ENCODE measurements at regions of chr20 and their contacts with region 1.

Region 1: GRCh38 chr20:35207950-35208611 is 18.4 kb upstream of the MMP24 start:
- DNase-seq: peak; percentile 92
- H3K4me3 ChIP-seq: peak overlapping the region in 1 of 3 experiments; percentile 42
- H3K27ac ChIP-seq: peak overlapping the region; percentile 53
- H3K4me1 ChIP-seq: peaks cover 6% of the 10 kb centered on the region
- H3K27me3 ChIP-seq: no peaks in the 10 kb centered on the region
- CTCF ChIP-seq: peak; percentile 62 to 66
- POLR2A ChIP-seq: peak; percentile 16

Region 2: GRCh38 chr20:35021063-35021462 is 187.0 kb before region 1 on chr20:
- CTCF ChIA-PET with region 1: interaction called, 3 read pairs
- POLR2A ChIA-PET with region 1: no interaction called
- dilution Hi-C with region 1: no loop called
- intact Hi-C with region 1: loop called (anchors 5 kb)
- DNase-seq: peak; percentile 77
- H3K4me3 ChIP-seq: no peak overlapping the region
- H3K27ac ChIP-seq: peak overlapping the region; percentile 81
- H3K4me1 ChIP-seq: peaks cover 17% of the 10 kb centered on the region
- H3K27me3 ChIP-seq: no peaks in the 10 kb centered on the region
- CTCF ChIP-seq: no peak
- POLR2A ChIP-seq: no peak

Region 3: GRCh38 chr20:35111141-35111888 is 96.8 kb before region 1 on chr20:
- CTCF ChIA-PET with region 1: interaction called, 10 read pairs
- POLR2A ChIA-PET with region 1: no interaction called
- dilution Hi-C with region 1: no loop called
- intact Hi-C with region 1: no loop called
- DNase-seq: peak; percentile 62
- H3K4me3 ChIP-seq: no peak overlapping the region
- H3K27ac ChIP-seq: peak overlapping the region; percentile 91
- H3K4me1 ChIP-seq: peaks cover 16% of the 10 kb centered on the region
- H3K27me3 ChIP-seq: no peaks in the 10 kb centered on the region
- CTCF ChIP-seq: no peak
- POLR2A ChIP-seq: no peak

Region 4: GRCh38 chr20:35226775-35227681 is 18.9 kb after region 1 on chr20:
- CTCF ChIA-PET with region 1: interaction called, 12 read pairs
- POLR2A ChIA-PET with region 1: no interaction called
- dilution Hi-C with region 1: no loop called
- intact Hi-C with region 1: no loop called
- DNase-seq: peak; percentile 35
- H3K4me3 ChIP-seq: no peak overlapping the region
- H3K27ac ChIP-seq: no peak overlapping the region
- H3K4me1 ChIP-seq: peaks cover 19% of the 10 kb centered on the region
- H3K27me3 ChIP-seq: peaks cover 8 to 14% of the 10 kb centered on the region in 2 experiments
- CTCF ChIP-seq: no peak
- POLR2A ChIP-seq: no peak